ENCODE measurements at regions of chr16 and their contacts with region 1.

Region 1: DNA sequence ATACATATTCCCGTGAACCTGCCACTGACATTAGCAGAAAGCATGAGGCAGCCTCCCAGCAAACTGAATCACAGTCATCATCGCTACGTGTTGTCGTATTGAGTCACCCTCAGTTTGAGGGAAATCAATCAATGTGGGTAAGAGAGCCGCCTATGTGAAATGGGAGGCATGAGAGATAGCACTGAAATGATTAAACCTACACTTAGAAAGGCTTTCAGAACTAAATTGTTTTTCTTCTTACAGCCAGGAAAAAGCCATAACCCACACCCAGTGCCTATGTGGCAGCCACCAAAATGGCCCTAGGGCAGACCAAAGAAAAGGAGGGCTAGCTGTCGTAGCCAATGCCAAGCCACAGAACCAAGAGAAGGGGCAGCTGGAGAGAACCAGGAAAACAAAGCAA is 90.5 kb downstream of the ADAMTS18 start:
- DNase-seq: no peak
- CTCF ChIP-seq: no peak

Region 2: DNA sequence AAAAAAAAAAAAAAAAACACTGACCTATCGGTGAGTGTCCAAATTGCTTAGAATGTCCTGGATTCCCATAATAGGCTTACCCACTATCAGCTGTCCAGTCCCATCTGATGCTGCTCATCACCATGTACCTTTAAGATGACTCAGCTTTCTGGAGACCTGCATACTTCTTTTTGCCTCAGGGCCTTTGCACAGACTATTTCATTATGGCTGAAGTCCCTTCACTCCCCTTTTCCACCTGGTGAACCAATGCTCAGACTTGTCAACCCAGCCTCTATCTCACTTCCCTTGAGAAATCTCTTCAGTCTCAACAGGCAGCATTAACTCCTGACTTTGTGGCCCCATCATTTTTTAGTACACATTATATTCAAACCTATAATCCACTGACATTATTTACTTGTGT is 348.3 kb after region 1 on chr16:
- CTCF ChIA-PET with region 1: no interaction called
- POLR2A ChIA-PET with region 1: interaction called, 10 read pairs
- DNase-seq: no peak
- CTCF ChIP-seq: no peak

Measured in GM10248 (cell line).